GM12878 (cell line): ENCODE measurements at regions of chr18 and their contacts with region 1.

Region 1: DNA sequence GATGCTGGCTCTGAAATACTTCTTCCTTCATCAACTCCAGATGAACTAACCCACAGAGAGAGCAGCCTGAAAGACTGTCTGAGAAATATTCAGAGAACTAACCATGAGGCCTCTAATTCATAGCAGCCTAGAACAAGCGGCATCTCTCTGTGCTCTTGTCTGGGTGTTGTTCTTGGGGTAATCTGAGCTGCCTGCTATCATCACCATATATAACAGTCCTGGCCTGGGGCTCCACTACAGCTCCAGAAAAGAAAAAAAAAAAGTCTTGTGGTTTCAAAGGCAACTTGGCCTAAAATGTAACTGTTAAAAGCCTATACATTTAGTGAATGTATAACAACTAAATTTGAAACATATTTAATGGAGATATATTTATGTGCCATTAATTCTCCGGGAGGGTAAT is 294.1 kb downstream of the HRH4 start:
- DNase-seq: no peak
- ATAC-seq: no peak
- H3K4me3 ChIP-seq: no peak overlapping the region
- H3K27ac ChIP-seq: no peak overlapping the region
- H3K4me1 ChIP-seq: no peaks in the 10 kb centered on the region
- H3K27me3 ChIP-seq: no peaks in the 10 kb centered on the region
- CTCF ChIP-seq: no peak
- EP300 ChIP-seq: no peak
- POLR2A ChIP-seq: no peak
- RAD21 ChIP-seq: no peak

Region 2: DNA sequence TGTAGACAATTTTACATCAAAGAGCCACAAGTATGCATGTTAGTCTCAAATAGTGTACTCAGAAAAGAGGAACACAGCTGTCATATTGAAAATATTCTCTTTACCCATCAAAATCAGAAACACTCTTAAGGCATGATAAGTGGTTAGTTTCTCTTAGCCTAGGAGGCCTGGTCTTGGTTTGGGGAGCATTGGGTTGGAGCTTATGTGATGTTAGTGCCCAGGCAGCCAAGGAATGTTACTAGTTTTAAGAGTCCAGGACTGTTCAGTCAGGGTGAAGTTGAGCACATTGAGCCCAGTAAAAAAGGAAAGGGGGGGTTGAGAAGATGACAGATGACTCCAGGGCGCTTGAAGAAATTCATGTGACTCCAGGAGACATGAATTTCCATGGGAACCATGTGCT is 46.4 kb after region 1 on chr18:
- CTCF ChIA-PET with region 1: no interaction called
- POLR2A ChIA-PET with region 1: no interaction called
- RAD21 ChIA-PET with region 1: no interaction called
- SMC1A ChIA-PET with region 1: no interaction called
- in situ Hi-C with region 1: no loop called
- intact Hi-C with region 1: loop called (anchors 10 kb)
- DNase-seq: no peak
- ATAC-seq: no peak
- H3K4me3 ChIP-seq: no peak overlapping the region
- H3K27ac ChIP-seq: no peak overlapping the region
- H3K4me1 ChIP-seq: no peaks in the 10 kb centered on the region
- H3K27me3 ChIP-seq: no peaks in the 10 kb centered on the region
- CTCF ChIP-seq: no peak
- EP300 ChIP-seq: no peak
- POLR2A ChIP-seq: no peak
- RAD21 ChIP-seq: no peak